HCT116 (cell line): ENCODE measurements at regions of chr5 and their contacts with region 1.

Region 1: DNA sequence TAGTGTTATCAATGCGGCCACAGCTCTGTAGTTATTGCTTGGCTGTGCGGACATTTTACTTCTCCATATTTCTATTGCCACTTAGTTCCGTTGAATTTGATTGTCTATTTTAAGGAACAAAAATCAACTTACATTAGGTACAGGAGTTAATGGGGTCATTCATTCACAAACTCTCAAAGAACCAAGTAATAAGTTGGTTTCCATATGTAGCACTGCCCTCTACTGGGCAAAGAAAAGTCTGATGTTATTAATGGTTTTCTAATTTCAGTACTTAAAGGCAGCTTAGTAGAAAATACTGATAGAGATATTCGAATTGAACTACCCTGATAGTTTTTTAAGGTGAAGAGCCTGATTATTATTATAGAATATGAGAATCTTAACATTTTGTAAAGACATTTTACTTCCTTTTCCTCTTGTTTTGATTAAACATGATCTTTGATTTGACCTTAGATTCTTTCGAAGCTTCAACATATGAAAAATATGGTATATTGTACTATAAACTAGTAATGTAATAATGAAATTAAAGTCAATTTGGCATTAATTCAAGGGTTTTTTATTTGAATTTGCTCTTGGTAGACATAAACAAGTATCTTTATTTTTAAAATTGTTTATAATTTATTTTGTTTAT is 119.5 kb upstream of the CTNND2 start:
- DNase-seq: no peak
- ATAC-seq: no peak
- H3K4me3 ChIP-seq: no peak overlapping the region
- H3K27ac ChIP-seq: no peak overlapping the region
- H3K4me1 ChIP-seq: no peaks in the 10 kb centered on the region
- H3K27me3 ChIP-seq: no peaks in the 10 kb centered on the region
- CTCF ChIP-seq: peak; percentile 7 to 64 (median 45); a peak in 4 of 6 replicates
- POLR2A ChIP-seq: no peak
- RAD21 ChIP-seq: peak; percentile 23; the same call in 1 of the 2 replicates

Region 2: GRCh38 chr5:11268891-11269290 is 754.8 kb before region 1 on chr5:
- CTCF ChIA-PET with region 1: no interaction called
- POLR2A ChIA-PET with region 1: no interaction called
- RAD21 ChIA-PET with region 1: no interaction called
- intact Hi-C with region 1: loop called (anchors 5 kb)
- DNase-seq: no peak
- ATAC-seq: no peak
- H3K4me3 ChIP-seq: no peak overlapping the region
- H3K27ac ChIP-seq: no peak overlapping the region
- H3K4me1 ChIP-seq: no peaks in the 10 kb centered on the region
- H3K27me3 ChIP-seq: no peaks in the 10 kb centered on the region
- CTCF ChIP-seq: no peak
- POLR2A ChIP-seq: no peak
- RAD21 ChIP-seq: no peak